Transverse colon (tissue), 4 donors: ENCODE measurements at regions of chr4 and their contacts with region 1.

Region 1: DNA sequence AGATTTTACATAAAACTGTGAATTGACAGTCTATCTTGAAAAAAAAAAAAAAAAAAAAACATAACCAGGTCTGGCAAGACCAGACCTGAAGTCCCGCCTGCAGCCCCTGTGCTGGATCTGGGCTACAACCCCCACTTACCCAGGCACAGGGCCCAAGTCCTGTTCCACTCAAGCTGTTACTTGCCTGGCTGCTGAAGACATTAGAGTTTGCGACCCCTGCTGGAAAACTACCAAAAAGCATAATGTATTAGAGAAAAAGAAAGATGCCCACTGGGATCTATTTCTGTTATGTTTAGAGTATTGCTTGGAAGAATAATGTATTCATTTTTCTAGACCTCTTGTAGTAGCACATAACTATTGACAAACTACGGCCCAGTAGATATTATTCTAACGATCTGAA is 4.7 kb downstream of the HS3ST1 start:
- DNase-seq: no peak
- H3K4me3 ChIP-seq: no peak overlapping the region
- H3K27ac ChIP-seq: no peak overlapping the region
- H3K4me1 ChIP-seq: peaks cover 0 to 20% (median 7%) of the 10 kb centered on the region in 4 donors
- H3K27me3 ChIP-seq: peaks cover 11% of the 10 kb centered on the region
- CTCF ChIP-seq: peak in 2 of 5 experiments; percentile 19 to 30
- EP300 ChIP-seq: no peak
- POLR2A ChIP-seq: no peak

Region 2: GRCh38 chr4:10517671-10518070 is 906.3 kb before region 1 on chr4:
- in situ Hi-C with region 1: no loop called
- intact Hi-C with region 1: no loop called
- DNase-seq: no peak
- H3K4me3 ChIP-seq: no peak overlapping the region
- H3K27ac ChIP-seq: no peak overlapping the region
- H3K4me1 ChIP-seq: no peaks in the 10 kb centered on the region
- H3K27me3 ChIP-seq: no peaks in the 10 kb centered on the region
- CTCF ChIP-seq: no peak
- EP300 ChIP-seq: no peak
- POLR2A ChIP-seq: no peak

Region 3: DNA sequence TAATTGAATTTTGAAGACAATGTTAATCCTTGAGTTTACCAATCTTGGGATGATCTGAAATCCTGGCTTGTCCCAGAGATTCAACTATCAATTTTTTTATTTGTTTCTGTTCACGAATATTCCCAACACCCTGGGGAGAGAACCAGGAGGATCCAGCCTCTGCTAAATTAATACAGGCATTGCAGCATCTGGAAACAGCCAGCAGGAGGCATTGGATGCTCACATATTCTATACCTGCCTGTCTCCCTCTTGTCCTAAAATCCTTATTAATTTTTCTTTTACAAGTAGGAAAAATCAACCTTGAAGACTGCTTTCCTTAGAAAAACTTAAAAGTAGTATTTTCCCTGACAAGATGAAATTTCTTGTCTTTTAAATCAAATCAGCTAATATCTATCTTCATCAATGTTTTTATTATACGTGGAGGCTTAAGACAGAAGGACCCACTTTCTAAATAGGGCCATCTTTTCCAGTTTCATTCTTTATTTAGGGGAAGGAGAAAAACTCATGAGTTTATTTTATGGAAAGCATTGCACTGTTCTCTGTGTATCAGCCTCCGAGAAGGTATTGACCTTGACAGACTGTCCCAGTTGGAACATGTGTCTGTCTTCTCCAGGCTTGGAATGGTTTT is 841.8 kb before region 1 on chr4:
- in situ Hi-C with region 1: loop called in 2 of 4 experiments (anchors 10 to 25 kb)
- intact Hi-C with region 1: no loop called
- DNase-seq: peak; percentile 36
- H3K4me3 ChIP-seq: no peak overlapping the region
- H3K27ac ChIP-seq: no peak overlapping the region
- H3K4me1 ChIP-seq: peaks cover 0 to 5% (median 2%) of the 10 kb centered on the region in 4 donors
- H3K27me3 ChIP-seq: no peaks in the 10 kb centered on the region
- CTCF ChIP-seq: peak; percentile 70 to 86 (median 85)
- EP300 ChIP-seq: no peak
- POLR2A ChIP-seq: no peak

Region 4: GRCh38 chr4:10622728-10623127 is 801.3 kb before region 1 on chr4:
- in situ Hi-C with region 1: loop called in 1 of 4 experiments (anchors 25 kb)
- intact Hi-C with region 1: no loop called
- DNase-seq: no peak
- H3K4me3 ChIP-seq: no peak overlapping the region
- H3K27ac ChIP-seq: no peak overlapping the region
- H3K4me1 ChIP-seq: no peaks in the 10 kb centered on the region
- H3K27me3 ChIP-seq: no peaks in the 10 kb centered on the region
- CTCF ChIP-seq: peak in 3 of 5 experiments; percentile 9 to 16 (median 14)
- EP300 ChIP-seq: no peak
- POLR2A ChIP-seq: no peak

Region 5: GRCh38 chr4:11635359-11636072 is 211.5 kb after region 1 on chr4:
- in situ Hi-C with region 1: loop called in 1 of 4 experiments (anchors 25 kb)
- intact Hi-C with region 1: no loop called
- DNase-seq: no peak
- H3K4me3 ChIP-seq: no peak overlapping the region
- H3K27ac ChIP-seq: no peak overlapping the region
- H3K4me1 ChIP-seq: peaks cover 0 to 4% (median 0%) of the 10 kb centered on the region in 4 donors
- H3K27me3 ChIP-seq: no peaks in the 10 kb centered on the region
- CTCF ChIP-seq: no peak
- EP300 ChIP-seq: no peak
- POLR2A ChIP-seq: no peak

Region 6: GRCh38 chr4:11720292-11720691 is 296.3 kb after region 1 on chr4:
- in situ Hi-C with region 1: loop called in 1 of 4 experiments (anchors 25 kb)
- intact Hi-C with region 1: no loop called
- DNase-seq: no peak
- H3K4me3 ChIP-seq: no peak overlapping the region
- H3K27ac ChIP-seq: no peak overlapping the region
- H3K4me1 ChIP-seq: peaks cover 0 to 5% (median 3%) of the 10 kb centered on the region in 4 donors
- H3K27me3 ChIP-seq: no peaks in the 10 kb centered on the region
- CTCF ChIP-seq: peak; percentile 55 to 79 (median 67)
- EP300 ChIP-seq: no peak
- POLR2A ChIP-seq: no peak